Activated naive CD4-positive, alpha-beta T cell treated with anti-CD3 and anti-CD28 coated beads for 36 hours (primary cell): ENCODE measurements at regions of chr6 and their contacts with region 1.

Region 1: DNA sequence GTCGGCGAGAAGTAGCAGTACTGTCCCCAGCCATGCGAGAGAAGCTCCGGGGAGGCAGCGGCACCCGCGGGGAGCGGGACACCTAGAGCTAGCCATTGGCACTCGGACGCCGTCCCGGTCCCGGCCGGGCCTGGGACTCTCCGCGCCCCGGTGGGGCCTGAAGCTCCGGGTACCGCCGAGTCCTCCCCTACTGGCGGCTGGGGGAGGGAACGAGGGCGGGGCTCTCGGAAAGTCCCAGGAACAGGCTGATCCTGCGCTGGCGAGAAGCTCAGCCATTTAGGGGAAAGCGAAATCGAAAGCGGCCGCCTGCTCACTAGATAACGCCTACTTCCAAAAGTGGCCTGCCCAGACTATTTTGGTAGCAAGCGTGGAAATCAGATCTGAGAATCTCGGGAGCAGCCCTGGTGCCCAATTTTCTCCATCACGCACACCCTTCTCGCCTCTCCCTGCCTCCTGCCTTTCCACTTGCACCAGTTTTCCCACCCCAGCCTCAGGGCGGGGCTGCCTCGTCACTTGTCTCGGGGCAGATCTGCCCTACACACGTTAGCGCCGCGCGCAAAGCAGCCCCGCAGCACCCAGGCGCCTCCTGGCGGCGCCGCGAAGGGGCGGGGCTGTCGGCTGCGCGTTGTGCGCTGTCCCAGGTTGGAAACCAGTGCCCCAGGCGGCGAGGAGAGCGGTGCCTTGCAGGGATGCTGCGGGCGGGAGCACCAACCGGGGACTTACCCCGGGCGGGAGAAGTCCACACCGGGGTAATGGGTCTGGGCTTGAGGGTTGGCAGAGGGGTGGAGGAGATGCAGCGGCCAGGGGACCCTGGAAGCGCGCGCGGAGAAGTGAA is at the starts of genes PSMB9 and TAP1:
- DNase-seq: peak; percentile 98
- H3K4me3 Mint-ChIP-seq: peak within 1 kb of the TSS; percentile 100
- H3K27ac Mint-ChIP-seq: peak within 1 kb of the TSS; percentile 100
- H3K4me1 Mint-ChIP-seq: peaks cover 67% of the 10 kb centered on the region
- H3K27me3 Mint-ChIP-seq: no peaks in the 10 kb centered on the region
- total RNA-seq, gene PSMB9: 238 to 241 TPM
- total RNA-seq, gene TAP1: 187 TPM

Region 2: DNA sequence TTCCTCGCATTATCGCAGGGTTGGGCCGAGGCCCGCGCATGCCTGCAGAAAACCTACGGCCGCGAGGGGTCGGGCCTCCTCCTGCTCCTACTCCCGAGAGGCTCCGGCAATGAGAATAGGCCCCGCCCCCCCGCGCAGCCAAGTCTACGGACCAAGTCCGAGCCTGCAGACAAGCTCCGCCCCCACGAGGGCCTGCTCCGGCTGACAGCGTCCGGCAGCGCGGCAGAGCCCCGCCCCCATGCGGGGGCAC is 658.2 kb before region 1 on chr6:
- CTCF ChIA-PET with region 1: no interaction called
- intact Hi-C with region 1: loop called (anchors 5 kb)
- DNase-seq: peak; percentile 100
- H3K4me3 Mint-ChIP-seq: peak overlapping the region; percentile 97
- H3K27ac Mint-ChIP-seq: peak overlapping the region; percentile 95
- H3K4me1 Mint-ChIP-seq: peaks cover 36% of the 10 kb centered on the region
- H3K27me3 Mint-ChIP-seq: no peaks in the 10 kb centered on the region

Region 3: GRCh38 chr6:32838114-32838958 is 15.4 kb before region 1 on chr6 and contains the start of gene TAP2:
- CTCF ChIA-PET with region 1: interaction called, 153 read pairs
- intact Hi-C with region 1: loop called (anchors 1 kb)
- DNase-seq: peak; percentile 98
- H3K4me3 Mint-ChIP-seq: peak within 1 kb of the TSS; percentile 89
- H3K27ac Mint-ChIP-seq: peak within 1 kb of the TSS; percentile 99
- H3K4me1 Mint-ChIP-seq: peaks cover 81% of the 10 kb centered on the region
- H3K27me3 Mint-ChIP-seq: no peaks in the 10 kb centered on the region
- total RNA-seq, gene TAP2: 136 to 138 TPM

Region 4: GRCh38 chr6:33105916-33106871 is 252.4 kb after region 1 on chr6:
- CTCF ChIA-PET with region 1: no interaction called
- intact Hi-C with region 1: no loop called
- DNase-seq: no peak
- H3K4me3 Mint-ChIP-seq: no peak overlapping the region
- H3K27ac Mint-ChIP-seq: no peak overlapping the region
- H3K4me1 Mint-ChIP-seq: no peaks in the 10 kb centered on the region
- H3K27me3 Mint-ChIP-seq: peaks cover 20% of the 10 kb centered on the region

Region 5: DNA sequence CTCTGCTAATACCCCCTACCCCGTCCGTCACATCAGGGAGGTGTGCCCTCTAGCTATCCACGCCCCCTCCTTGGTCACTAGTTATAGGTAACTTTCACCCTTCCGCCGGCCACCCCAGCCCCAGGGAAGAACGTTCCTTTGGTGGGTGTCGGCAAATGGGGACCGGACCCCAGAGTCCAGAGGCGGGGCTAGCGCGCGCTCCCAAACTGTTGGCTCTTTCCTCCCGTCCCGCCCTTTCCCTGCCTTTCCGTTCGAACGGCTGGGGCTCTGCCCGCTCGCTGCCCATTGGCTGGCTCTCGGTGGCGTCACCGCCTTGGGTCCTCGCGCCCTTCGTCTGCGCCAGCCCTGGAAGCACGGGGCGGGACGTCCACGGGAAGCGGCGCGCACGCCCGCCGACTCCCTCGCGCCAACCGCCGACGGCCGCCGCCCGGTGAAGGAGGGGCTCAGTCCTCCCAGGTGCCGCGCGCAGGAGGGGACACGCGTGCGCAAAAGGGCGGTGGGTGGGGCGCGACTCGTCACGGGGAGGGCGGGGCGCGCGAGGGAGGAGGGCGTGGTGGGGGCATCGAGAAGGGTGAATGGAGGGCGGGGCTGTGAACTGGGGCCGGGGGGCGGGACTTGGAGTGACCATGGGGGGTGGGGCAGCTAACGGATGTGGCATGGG is 556.4 kb after region 1 on chr6:
- CTCF ChIA-PET with region 1: no interaction called
- intact Hi-C with region 1: loop called (anchors 5 kb)
- DNase-seq: peak; percentile 98
- H3K4me3 Mint-ChIP-seq: peak overlapping the region; percentile 87
- H3K27ac Mint-ChIP-seq: peak overlapping the region; percentile 93
- H3K4me1 Mint-ChIP-seq: peaks cover 39% of the 10 kb centered on the region
- H3K27me3 Mint-ChIP-seq: no peaks in the 10 kb centered on the region